ENCODE measurements at regions of chr1 and their contacts with region 1.

Region 1: GRCh38 chr1:202122639-202123335 is at the start of gene GPR37L1:
- DNase-seq: peak; percentile 32
- ATAC-seq: peak; percentile 71
- H3K4me3 ChIP-seq: no peak within 1 kb of the TSS
- H3K27ac ChIP-seq: no peak within 1 kb of the TSS
- H3K4me1 ChIP-seq: peaks cover 5% of the 10 kb centered on the region
- H3K27me3 ChIP-seq: no peaks in the 10 kb centered on the region
- CTCF ChIP-seq: peak; percentile 40; the same call in 1 of the 2 replicates
- total RNA-seq, gene GPR37L1: 0.04 TPM in 1 of 2 replicates, not detected in the other

Region 2: GRCh38 chr1:201888282-201889089 is 234.3 kb before region 1 on chr1 and contains the start of gene SHISA4:
- CTCF ChIA-PET with region 1: no interaction called
- POLR2A ChIA-PET with region 1: no interaction called
- intact Hi-C with region 1: no loop called
- DNase-seq: peak; percentile 49
- ATAC-seq: peak; percentile 87
- H3K4me3 ChIP-seq: peak within 1 kb of the TSS; percentile 81
- H3K27ac ChIP-seq: no peak within 1 kb of the TSS
- H3K4me1 ChIP-seq: peaks cover 26% of the 10 kb centered on the region
- H3K27me3 ChIP-seq: no peaks in the 10 kb centered on the region
- CTCF ChIP-seq: no peak
- total RNA-seq, gene SHISA4: 12.4 and 14.3 TPM in 2 replicates

Region 3: GRCh38 chr1:201999625-202000238 is 123.1 kb before region 1 on chr1:
- CTCF ChIA-PET with region 1: interaction called, 4 read pairs
- POLR2A ChIA-PET with region 1: no interaction called
- intact Hi-C with region 1: loop called (anchors 2 kb)
- DNase-seq: peak; percentile 65
- ATAC-seq: peak; percentile 76
- H3K4me3 ChIP-seq: no peak overlapping the region
- H3K27ac ChIP-seq: no peak overlapping the region
- H3K4me1 ChIP-seq: no peaks in the 10 kb centered on the region
- H3K27me3 ChIP-seq: no peaks in the 10 kb centered on the region
- CTCF ChIP-seq: peak; percentile 72

Measured in PC-3 (cell line).